ENCODE measurements at regions of chr2 and their contacts with region 1.

Region 1: GRCh38 chr2:82317012-82317411 is 2012.5 kb upstream of the LRRTM1 start:
- DNase-seq: no peak
- ATAC-seq: no peak
- H3K4me3 ChIP-seq: no peak overlapping the region
- H3K27ac ChIP-seq: no peak overlapping the region
- H3K4me1 ChIP-seq: no peaks in the 10 kb centered on the region
- H3K27me3 ChIP-seq: no peaks in the 10 kb centered on the region
- CTCF ChIP-seq: no peak

Region 2: DNA sequence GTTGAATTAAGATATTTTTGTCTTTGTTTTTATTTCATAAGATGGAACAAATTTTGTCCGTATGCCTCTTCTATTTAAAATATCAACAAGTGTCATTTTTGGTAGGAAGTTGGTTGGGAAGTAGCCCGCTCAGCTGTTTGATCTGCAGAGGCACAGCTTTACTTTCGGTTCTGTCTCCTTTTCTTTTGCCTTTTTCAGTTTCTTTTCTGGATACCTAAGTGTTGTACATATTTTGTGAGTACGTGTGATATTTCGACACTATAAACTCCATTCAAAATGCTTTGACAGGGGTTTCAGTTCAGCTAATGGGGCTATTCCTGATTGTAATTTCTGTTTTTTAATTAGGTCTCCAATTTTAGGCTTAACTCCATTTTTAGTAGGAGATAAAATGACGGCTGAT is 227.5 kb before region 1 on chr2:
- intact Hi-C with region 1: no loop called
- DNase-seq: no peak
- ATAC-seq: no peak
- H3K4me3 ChIP-seq: peak overlapping the region in 3 of 10 donors; percentile 7 to 31 (median 9)
- H3K27ac ChIP-seq: no peak overlapping the region
- H3K4me1 ChIP-seq: no peaks in the 10 kb centered on the region
- H3K27me3 ChIP-seq: no peaks in the 10 kb centered on the region
- CTCF ChIP-seq: no peak

Region 3: DNA sequence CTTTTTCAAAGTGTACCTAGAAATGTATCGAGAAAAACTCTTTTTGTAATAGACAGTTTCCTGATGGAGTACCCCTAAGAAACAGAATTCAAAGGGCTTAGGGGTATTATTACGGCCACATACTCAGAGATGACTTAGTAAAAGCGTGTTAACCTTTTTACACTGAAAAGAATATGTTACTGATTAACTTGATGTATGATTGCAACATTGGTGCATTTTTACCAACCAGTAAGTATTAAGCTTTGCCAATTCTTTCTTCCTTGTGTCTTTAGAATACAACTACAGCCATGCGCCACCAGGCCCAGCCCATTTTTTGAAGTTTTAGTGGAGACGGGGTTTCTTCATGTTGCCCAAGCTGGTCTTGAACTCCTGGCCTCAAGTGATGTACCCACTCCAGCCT is 15.5 kb before region 1 on chr2:
- intact Hi-C with region 1: loop called in 1 of 10 experiments (anchors 1 kb)
- DNase-seq: no peak
- ATAC-seq: no peak
- H3K4me3 ChIP-seq: no peak overlapping the region
- H3K27ac ChIP-seq: no peak overlapping the region
- H3K4me1 ChIP-seq: no peaks in the 10 kb centered on the region
- H3K27me3 ChIP-seq: no peaks in the 10 kb centered on the region
- CTCF ChIP-seq: no peak

Region 4: DNA sequence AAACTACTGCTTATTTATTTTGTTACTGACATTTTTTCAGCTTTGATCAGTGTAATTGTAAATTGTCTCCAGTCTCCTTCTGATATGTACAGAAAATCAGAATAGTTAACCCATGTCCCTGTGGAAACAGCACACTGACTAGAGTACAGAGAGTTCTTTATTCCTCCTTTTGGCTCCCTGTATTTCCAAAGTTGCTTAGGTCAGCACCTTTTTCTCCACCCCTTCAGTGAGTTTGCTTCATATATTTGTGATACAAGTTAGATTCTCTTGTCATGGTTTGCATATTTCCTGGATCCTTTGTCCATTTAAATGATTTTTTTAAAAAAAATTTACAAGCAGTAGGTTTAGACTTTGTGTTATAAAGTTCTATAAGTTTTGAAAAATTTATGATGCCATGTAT is 38.6 kb after region 1 on chr2:
- intact Hi-C with region 1: no loop called
- DNase-seq: no peak
- ATAC-seq: no peak
- H3K4me3 ChIP-seq: no peak overlapping the region
- H3K27ac ChIP-seq: no peak overlapping the region
- H3K4me1 ChIP-seq: no peaks in the 10 kb centered on the region
- H3K27me3 ChIP-seq: no peaks in the 10 kb centered on the region
- CTCF ChIP-seq: no peak

Measured in heart right ventricle (tissue), 16 donors.